ENCODE measurements at regions of chr3 and their contacts with region 1.

Region 1: GRCh38 chr3:28901018-28901417 is 379.9 kb upstream of the RBMS3 start:
- DNase-seq: no peak
- CTCF ChIP-seq: no peak

Region 2: DNA sequence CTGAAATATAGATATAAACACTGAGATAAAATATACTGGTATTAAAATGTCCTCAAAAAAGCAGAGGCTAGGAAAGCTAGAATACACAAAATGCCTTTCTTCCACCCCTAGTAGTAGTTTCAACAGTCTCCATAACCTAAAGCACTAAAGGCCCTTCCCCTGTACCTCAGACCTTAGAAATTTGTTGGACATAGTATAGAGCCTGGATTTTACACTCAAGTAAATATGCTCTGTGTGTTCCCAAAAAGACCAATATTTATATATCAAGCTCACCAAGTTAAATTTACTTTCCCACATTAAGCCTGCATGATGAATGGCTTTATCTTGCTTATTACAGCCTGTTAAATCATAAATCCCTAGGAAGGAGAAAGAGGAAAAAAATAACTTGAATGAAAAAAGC is 173.7 kb before region 1 on chr3:
- CTCF ChIA-PET with region 1: no interaction called
- POLR2A ChIA-PET with region 1: no interaction called
- DNase-seq: no peak
- CTCF ChIP-seq: no peak

Region 3: GRCh38 chr3:28877912-28878311 is 23.1 kb before region 1 on chr3:
- CTCF ChIA-PET with region 1: interaction called, 10 read pairs
- POLR2A ChIA-PET with region 1: no interaction called
- DNase-seq: no peak
- CTCF ChIP-seq: no peak

Region 4: GRCh38 chr3:28940530-28940929 is 39.5 kb after region 1 on chr3:
- CTCF ChIA-PET with region 1: no interaction called
- POLR2A ChIA-PET with region 1: no interaction called
- DNase-seq: peak; percentile 26
- CTCF ChIP-seq: no peak

Measured in GM10248 (cell line).